ENCODE measurements at regions of chr5 and their contacts with region 1.

Region 1: GRCh38 chr5:112146323-112147226 is 272.5 kb downstream of the EPB41L4A start:
- DNase-seq: peak in 5 of 10 donors; percentile 14 to 65 (median 54)

Region 2: GRCh38 chr5:111158105-111158744 is 988.4 kb before region 1 on chr5:
- intact Hi-C with region 1: loop called (anchors 5 kb)
- DNase-seq: peak in 7 of 10 donors; percentile 16 to 86 (median 74)

Region 3: GRCh38 chr5:111530298-111530740 is 616.3 kb before region 1 on chr5:
- intact Hi-C with region 1: loop called (anchors 5 kb)
- DNase-seq: peak in 8 of 10 donors; percentile 17 to 87 (median 34)

Region 4: GRCh38 chr5:111550279-111551020 is 596.1 kb before region 1 on chr5:
- intact Hi-C with region 1: loop called (anchors 1 kb)
- DNase-seq: peak in 9 of 10 donors; percentile 19 to 88 (median 64)

Region 5: GRCh38 chr5:112228667-112229066 is 82.1 kb after region 1 on chr5:
- intact Hi-C with region 1: no loop called
- DNase-seq: peak in 5 of 10 donors; percentile 6 to 76 (median 10)